MCF 10A (cell line): ENCODE measurements at regions of chr16 and their contacts with region 1.

Region 1: DNA sequence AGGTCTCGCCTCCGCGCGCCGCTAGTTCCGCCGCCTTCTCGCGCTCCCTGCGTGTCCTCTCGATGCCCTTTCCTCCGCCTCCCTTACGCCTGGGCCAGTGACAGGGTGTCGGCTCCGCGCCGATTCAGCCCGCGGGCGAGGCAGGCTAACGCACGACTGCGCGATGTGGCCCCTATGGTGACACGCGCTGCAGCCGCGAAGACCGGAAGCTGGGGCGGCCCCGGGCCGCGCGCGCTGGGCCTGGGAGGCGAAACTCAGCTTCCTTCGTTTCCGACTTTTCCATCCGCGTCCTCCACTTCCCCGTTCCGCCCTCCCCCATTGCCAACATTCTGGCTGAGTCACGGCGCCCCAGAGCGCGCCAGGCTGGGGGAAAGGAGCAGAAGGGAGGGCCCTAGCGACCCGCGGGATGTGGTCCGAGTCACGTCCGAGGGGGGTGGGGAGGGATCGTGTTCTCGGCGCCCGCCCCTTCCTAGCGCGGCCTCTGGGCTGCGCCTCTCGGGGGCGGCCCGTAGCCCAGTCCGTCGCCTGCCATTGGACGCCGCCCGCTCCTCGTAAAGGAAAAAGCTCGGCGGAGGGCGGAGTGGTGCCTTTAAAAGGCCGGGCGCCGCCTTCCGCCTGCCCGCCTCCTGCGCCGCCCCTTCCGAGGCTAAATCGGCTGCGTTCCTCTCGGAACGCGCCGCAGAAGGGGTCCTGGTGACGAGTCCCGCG is at the start of gene ALDOA:
- DNase-seq: peak; percentile 99
- H3K4me3 Mint-ChIP-seq: peak within 1 kb of the TSS; percentile 97
- H3K27ac Mint-ChIP-seq: peak within 1 kb of the TSS; percentile 95
- H3K4me1 Mint-ChIP-seq: peaks cover 25% of the 10 kb centered on the region
- H3K27me3 Mint-ChIP-seq: no peaks in the 10 kb centered on the region
- CTCF ChIP-seq: no peak
- total RNA-seq, gene ALDOA: 1,141 and 1,165 TPM in 2 replicates

Region 2: GRCh38 chr16:29805378-29806098 is 259.8 kb before region 1 on chr16:
- CTCF ChIA-PET with region 1: no interaction called
- POLR2A ChIA-PET with region 1: interaction called, 12 read pairs
- intact Hi-C with region 1: no loop called
- DNase-seq: peak; percentile 95
- H3K4me3 Mint-ChIP-seq: peak overlapping the region; percentile 92
- H3K27ac Mint-ChIP-seq: peak overlapping the region; percentile 98
- H3K4me1 Mint-ChIP-seq: peaks cover 29% of the 10 kb centered on the region
- H3K27me3 Mint-ChIP-seq: no peaks in the 10 kb centered on the region
- CTCF ChIP-seq: no peak

Region 3: GRCh38 chr16:30075507-30076275 is 10.4 kb after region 1 on chr16 and contains the start of gene PPP4C:
- CTCF ChIA-PET with region 1: no interaction called
- POLR2A ChIA-PET with region 1: interaction called, 155 read pairs
- intact Hi-C with region 1: loop called (anchors 1 kb)
- DNase-seq: peak; percentile 88
- H3K4me3 Mint-ChIP-seq: peak within 1 kb of the TSS; percentile 84
- H3K27ac Mint-ChIP-seq: peak within 1 kb of the TSS; percentile 97
- H3K4me1 Mint-ChIP-seq: peaks cover 20% of the 10 kb centered on the region
- H3K27me3 Mint-ChIP-seq: no peaks in the 10 kb centered on the region
- CTCF ChIP-seq: no peak
- total RNA-seq, gene PPP4C: 93.2 and 99.7 TPM in 2 replicates

Region 4: GRCh38 chr16:30091474-30092372 is 26.4 kb after region 1 on chr16 and contains the start of gene TBX6:
- CTCF ChIA-PET with region 1: interaction called, 3 read pairs
- POLR2A ChIA-PET with region 1: interaction called, 25 read pairs
- intact Hi-C with region 1: no loop called
- DNase-seq: peak; percentile 89
- H3K4me3 Mint-ChIP-seq: peak within 1 kb of the TSS; percentile 79
- H3K27ac Mint-ChIP-seq: peak within 1 kb of the TSS; percentile 57
- H3K4me1 Mint-ChIP-seq: peaks cover 37% of the 10 kb centered on the region
- H3K27me3 Mint-ChIP-seq: no peaks in the 10 kb centered on the region
- CTCF ChIP-seq: peak; percentile 74
- total RNA-seq, gene TBX6: 0.16 and 0.47 TPM in 2 replicates

Region 5: DNA sequence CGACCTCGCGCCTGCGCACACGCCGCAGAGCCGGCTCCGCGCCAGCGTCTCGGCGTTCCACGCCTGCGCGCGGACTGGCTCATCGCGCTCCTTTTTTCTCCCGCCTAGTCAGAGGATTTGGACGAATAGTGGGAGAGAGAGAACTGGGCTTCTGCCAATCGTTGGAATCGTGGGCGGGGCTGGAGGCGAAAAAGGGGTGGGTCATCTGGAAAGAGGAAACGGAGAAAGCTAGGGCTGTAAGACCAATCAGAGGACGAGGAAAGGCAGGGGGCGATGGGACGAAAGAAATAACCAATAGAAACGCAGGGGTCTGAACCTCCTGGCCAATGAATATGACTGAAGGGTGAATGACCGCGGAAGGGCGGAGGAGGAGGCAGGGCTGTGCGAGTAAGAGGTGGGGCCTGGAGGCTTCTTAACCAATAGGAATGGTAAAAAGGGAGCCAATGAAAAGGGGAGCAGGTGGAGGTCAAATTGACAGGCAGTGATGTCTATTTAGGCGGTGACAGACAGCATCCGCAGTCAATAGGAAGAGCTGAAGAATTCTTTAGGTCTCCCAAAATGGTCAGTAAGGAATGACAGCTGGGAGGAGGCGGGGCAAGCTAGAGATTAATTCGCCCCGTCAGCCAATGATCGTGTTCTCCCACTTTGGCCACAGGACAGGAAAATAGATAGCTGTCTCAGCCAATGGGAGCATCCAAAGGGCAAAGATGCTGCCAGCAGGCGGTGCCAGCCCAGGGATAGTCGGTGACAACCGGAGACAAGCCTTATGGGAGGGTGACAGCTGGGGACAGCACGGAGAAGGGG is 305.3 kb after region 1 on chr16 and contains the start of gene TBC1D10B:
- CTCF ChIA-PET with region 1: no interaction called
- POLR2A ChIA-PET with region 1: interaction called, 13 read pairs
- intact Hi-C with region 1: no loop called
- DNase-seq: peak; percentile 100
- H3K4me3 Mint-ChIP-seq: peak within 1 kb of the TSS; percentile 78
- H3K27ac Mint-ChIP-seq: peak within 1 kb of the TSS; percentile 89
- H3K4me1 Mint-ChIP-seq: peaks cover 44% of the 10 kb centered on the region
- H3K27me3 Mint-ChIP-seq: no peaks in the 10 kb centered on the region
- CTCF ChIP-seq: no peak
- total RNA-seq, gene TBC1D10B: 46.5 and 48.0 TPM in 2 replicates